ENCODE measurements at regions of chr15 and their contacts with region 1.

Region 1: DNA sequence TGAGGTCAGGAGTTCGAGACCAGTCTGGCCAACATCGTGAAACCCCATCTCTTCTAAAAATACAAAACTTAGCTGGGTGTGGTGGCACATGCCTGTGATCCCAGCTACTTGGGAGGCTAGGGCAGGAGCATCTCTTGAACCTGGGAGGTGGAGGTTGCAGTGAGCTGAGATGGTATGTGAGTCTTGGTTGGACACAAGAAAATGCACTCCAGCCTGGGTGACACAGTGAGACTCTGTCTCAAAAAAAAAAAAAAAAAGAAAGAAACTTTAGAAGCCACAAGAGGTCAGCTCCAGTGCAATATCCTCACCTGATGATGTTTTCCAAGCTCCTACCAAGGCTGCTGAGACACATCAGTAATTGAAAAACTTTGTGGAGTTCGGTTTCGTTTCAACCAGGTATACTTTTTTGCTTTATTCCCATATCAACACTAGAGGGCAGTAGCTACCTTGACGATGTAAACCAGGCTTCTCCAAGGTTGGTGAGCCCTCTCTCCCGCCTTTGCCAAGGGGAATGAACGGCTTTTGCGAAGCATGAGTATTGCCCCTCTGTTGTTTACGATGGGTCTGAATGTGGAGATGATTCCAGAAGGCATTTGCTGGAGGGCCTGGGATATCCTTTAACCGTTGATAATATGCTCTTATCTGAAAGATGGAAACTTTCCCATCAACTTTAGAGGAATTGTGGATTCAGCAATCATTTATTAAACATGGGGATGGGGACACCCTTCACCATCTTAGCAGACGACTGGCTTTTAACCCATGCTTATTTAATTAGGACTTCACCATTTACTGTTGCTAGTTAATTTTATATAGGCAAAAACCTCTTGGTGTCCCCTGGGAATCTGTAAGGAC is 202.8 kb downstream of the SV2B start:
- DNase-seq: no peak

Region 2: DNA sequence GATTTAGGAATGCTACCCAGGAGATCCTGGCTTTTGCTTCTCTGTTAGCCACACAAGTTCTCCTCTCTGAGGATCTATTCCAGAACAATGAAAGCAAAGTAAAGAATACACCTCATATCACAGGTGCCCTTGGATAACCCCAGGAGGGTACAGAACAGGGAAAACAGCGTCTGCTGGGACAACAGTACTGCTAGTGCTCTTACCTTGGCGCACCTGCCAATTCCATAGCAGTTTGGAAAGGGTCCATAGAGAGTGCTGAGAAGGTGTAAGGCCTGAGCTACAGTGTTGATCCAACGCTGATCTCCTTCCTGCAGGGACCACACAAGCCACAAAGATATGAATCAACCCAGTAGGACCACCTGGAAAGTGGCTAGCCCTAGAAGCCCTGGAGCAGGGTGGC is 295.5 kb before region 1 on chr15:
- intact Hi-C with region 1: no loop called
- DNase-seq: no peak

Region 3: DNA sequence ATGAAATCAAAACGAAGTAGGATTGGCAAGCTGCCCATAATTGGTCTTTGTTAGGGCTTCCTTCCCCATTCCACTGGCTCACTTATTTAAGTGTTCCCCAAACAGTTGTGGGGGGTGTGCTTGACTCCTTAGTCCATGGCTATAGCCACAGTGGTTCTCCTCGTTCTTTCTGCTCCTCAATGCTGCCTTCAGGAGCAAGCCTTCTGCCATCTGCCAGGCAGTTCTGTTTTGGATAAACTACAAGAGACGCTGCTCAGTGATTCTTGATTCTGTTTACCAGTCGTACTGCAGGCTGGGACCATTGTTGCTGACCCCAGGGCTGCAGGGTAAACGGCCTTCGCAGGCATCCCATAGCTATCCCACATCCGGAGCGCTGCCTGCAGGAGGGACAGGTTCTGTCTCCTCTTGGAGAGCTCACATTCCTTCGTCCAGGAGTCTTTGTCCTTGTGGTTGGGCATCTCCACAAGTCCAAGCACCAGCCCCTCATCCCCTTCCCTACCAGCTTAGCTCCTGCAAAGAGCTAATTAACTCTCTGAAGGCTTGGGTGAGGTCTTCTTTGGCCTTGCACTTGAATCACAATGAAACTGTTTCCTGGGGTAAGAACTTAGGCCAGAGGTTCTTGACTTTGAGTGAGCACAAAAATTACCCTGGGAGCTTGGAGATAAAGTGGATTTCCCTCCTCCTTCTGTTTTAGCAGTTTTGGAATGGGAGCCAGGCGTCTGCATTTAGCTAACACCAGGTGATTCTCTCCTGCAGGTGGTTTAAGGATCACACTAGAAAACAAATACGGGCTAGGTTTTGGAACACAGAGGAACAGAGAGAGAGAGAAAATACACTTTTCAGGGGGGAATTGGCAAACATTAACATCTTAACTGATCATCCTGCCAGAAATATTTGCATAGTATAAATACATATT is 87.9 kb before region 1 on chr15:
- intact Hi-C with region 1: no loop called
- DNase-seq: no peak

Region 4: DNA sequence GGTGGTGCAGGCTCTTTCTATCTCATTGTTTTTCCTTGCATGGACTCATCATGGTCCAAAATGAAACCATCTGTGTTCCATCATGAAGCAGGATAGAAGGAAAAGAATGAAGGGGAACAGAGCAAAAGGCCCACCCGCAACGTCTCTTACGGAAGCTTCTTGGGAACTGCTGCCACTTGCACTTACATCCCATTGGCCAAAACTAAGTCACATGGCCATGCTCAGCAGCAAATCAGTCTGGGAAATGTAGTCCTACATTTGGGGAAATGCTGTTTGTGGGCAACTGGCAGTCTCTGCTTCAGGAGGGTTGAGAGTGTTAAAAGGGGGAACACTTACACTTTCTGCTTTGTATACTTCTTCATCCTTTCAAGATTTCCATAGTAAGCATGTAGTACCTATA is 11.1 kb before region 1 on chr15:
- intact Hi-C with region 1: no loop called
- DNase-seq: no peak

Region 5: DNA sequence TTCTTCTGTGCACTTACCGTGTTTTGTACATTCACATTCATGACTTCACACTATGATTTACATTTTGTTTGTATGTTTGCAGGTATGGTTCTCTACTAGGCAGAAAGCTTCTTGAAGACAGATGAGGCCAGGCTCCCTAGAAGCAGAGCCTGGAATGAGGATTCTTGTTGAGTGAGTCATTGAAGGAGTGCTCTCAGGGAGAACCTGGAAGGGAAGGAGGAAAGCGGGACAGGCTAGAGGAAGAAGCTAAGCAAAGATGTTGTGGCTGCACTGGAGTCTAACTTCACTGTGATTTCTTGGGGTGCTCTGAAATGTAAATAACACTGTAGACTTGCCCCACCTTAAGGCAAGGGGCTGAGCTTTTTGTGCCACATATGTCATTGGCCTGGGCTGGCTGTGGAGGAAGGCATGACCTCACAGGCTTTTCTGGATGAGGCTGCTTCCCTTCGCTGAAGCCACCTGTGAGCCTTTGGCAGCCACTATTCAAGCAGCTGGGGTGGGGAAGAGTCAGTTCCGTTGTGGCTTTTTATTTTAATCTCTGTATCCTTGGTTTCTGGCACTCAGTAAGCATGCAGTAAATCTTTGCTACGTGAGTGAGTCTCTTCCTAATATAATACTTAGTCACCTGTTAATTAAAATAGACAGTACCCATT is 104.5 kb after region 1 on chr15:
- intact Hi-C with region 1: loop called (anchors 10 kb)
- DNase-seq: no peak

Region 6: GRCh38 chr15:91522663-91523332 is 220.0 kb after region 1 on chr15:
- intact Hi-C with region 1: loop called (anchors 2 kb)
- DNase-seq: no peak

Region 7: GRCh38 chr15:91706322-91707032 is 403.7 kb after region 1 on chr15:
- intact Hi-C with region 1: loop called (anchors 10 kb)
- DNase-seq: peak; percentile 91

Region 8: DNA sequence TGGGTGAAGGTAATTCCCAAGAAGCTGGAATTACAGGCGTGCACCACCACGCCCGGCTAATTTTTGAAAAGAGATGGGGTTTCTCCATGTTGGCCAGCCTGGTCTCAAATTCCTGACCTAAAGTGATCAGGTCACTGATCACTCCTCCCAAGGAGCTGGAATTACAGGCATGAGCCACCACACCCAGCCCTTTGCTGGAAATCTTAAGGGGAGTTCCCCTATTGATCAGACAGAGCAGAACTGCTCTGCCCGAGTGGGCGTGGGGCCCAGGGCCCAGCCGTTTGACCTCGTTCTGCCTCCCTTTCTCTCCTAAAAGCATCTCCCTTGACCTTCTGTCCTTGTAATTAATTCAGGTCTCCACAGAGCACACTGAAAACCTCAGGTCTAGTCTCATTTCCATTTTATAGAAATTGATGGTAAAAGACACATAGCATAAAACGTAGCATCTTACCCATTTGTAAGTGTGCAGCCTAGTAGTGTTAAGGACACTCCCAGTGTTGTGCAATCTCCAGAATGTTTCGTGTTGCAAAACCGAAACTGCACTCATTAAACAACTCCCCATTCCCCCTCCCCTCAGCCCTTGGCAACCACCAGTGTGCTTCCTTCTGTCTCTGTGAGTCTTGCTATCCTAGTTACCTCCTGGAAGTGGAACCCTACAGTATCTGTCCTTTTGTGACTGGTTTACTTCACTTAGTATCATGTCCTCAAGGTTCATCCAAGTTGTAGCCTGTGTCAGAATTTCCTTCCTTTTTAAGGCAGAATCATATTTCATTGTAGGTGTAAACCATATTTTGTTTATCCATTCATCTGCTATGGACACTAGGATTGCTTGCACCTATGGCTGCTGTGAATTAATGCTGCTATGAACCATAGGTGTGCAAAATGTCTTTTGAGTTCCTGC is 640.1 kb after region 1 on chr15:
- intact Hi-C with region 1: loop called (anchors 10 kb)
- DNase-seq: peak; percentile 87

Region 9: GRCh38 chr15:92077353-92078085 is 774.7 kb after region 1 on chr15:
- intact Hi-C with region 1: loop called (anchors 5 kb)
- DNase-seq: peak; percentile 89